ENCODE measurements at regions of chr1 and their contacts with region 1.

Region 1: DNA sequence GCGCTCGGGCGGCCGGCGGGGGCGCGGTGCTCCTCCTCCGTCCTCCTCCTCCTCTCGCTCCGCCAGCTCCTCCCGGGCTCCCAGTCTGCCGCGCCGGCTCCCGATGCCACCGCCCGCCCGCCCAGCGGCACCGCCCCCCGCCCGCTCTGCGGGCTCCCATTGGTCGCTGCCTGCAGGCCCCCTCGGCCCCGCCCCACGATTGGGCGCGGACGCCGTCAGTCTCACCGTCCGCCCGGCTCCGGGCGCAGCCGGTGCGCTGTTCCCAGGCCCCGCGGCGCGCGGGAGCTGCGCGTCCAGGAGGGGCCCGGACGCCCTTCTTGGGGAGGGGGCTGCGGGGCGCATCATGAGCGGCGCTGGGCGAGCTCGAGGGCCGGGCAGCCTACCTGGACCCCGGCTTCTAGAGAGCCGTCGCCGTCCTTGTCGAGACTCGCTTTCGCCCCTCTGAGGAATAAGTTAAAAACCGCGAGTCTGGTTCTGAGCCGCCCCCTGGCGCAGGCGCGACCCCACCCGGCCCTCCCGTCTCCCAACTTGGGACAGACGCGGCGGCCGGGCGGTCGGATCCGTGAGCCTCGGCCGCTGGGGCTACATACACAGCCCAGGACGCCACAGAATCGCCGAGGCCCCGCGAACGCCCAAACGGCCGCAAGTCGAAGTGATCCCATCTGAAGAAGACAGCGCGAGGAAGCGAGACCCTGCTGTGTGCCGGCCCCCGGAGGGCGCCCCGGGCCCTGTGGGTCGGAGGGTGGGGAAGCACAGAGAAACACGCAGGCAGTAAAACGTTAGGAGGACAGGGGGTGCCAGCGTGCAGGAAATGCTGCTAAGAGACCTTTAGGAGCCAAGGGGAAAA is at the start of gene SIPA1L2:
- DNase-seq: peak; percentile 99
- CTCF ChIP-seq: no peak

Region 2: DNA sequence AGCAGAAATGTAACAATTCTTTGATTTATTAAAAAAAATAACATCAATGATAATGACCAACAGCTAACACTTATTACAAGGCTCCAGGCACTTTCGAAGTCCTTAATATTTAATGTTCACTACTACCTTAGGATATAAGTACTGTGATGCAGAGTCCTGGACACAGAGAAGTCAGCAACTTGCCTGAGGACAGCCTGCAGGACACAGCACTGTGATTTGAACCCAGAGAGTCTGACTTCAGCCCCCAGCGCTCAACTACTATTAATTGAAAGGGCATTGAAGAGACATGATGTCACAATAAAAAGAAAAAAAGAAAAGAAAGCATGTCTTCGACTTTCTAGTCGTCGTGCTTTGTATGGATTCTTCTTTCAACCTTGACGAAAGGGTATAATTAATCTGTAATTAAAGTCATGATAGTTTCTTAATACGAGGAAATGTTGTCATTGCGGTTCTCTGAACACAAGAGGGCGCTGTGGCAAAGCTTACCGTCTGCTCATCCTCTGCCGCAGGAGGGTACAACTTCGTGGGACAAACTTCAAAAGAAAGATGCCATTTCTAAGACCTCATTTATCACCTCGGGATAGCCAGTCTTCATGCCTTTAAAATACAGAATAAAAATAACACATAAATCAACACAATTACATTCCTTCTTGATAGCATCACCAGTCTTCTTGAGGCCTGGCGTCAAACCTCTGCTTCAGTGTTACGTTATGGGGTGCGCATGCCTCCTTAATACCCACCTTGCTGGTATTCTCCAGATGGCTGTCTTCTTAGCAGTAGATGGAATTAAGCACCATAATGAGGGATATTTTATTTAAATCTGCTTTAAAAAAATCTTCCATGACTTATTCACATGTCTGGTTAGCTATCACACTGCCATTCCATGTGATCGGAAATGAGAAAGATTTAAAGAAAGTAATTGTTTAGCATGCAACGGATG is 763.6 kb before region 1 on chr1:
- in situ Hi-C with region 1: loop called (anchors 25 kb)
- DNase-seq: peak; percentile 51
- CTCF ChIP-seq: peak; percentile 62

Region 3: DNA sequence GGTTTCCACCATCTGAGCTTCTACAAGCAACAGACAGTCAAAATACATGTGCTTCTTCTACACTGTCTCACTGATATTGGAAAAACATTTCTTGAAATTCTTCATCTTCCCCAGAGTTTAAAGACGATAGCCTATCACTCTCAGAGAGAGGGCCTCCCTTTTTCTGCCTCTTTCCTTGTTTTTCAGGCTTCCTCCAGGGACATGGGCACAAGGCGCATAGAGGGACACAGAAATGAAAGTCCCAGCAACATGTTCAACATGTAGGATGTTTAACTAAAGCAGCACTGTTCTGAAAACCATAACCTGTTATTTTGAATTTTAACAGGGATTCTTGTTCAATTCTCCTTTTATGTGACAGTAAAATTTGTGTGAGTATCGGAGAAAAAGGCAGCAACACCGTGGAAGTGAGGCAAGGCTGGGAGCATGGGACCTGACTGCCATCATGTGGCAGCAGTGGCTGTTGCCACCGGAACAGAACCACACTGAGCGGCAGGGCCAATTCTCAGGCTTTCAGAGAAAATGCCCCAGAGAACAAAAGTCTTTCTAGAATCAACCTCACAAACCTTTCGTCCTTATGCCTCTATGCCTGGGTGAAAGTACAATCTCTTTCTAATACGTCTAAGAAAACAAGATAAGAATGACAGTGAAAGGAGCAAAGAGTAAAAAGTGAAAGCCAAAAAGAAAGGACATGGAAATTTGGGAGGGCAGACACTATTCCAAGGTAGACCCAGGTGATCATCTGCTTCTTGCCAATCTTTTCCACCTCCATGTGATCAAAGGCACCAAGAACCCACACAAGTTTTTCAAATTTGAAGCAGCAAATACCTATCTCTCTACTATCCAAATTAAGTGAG is 610.8 kb after region 1 on chr1:
- in situ Hi-C with region 1: loop called (anchors 10 kb)
- DNase-seq: peak; percentile 37
- CTCF ChIP-seq: peak; percentile 49

Measured in GM13976 (cell line).